ENCODE measurements at regions of chr9 and their contacts with region 1.

Region 1: DNA sequence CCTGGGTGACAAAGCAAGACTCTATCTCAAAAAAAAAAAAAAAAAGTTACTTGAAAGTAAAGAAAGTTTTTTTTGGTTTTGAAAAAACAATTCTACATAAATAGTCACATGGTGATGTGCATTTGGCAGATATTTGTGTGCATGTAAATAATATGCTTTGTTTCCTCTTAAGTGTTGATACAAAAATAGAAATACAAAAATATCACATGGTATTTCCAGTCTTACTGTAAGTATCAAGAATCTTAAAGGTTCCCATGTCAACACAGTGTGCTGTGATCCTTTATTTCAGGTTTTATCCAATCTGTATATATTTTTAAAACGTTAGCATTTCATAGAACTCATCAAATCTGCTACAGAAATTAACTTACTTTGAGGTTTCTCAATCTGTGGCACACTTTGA is 521.9 kb downstream of the TLE4 start:
- DNase-seq: no peak
- H3K4me3 ChIP-seq: no peak overlapping the region
- H3K4me3 Mint-ChIP-seq: no peak overlapping the region
- H3K27ac Mint-ChIP-seq: no peak overlapping the region
- H3K4me1 ChIP-seq: no peaks in the 10 kb centered on the region
- H3K4me1 Mint-ChIP-seq: no peaks in the 10 kb centered on the region
- H3K27me3 ChIP-seq: no peaks in the 10 kb centered on the region
- H3K27me3 Mint-ChIP-seq: no peaks in the 10 kb centered on the region
- CTCF ChIP-seq: no peak

Region 2: GRCh38 chr9:80004714-80005113 is 89.0 kb before region 1 on chr9:
- CTCF ChIA-PET with region 1: no interaction called
- POLR2A ChIA-PET with region 1: no interaction called
- intact Hi-C with region 1: no loop called
- DNase-seq: no peak
- H3K4me3 ChIP-seq: no peak overlapping the region
- H3K4me3 Mint-ChIP-seq: no peak overlapping the region
- H3K27ac Mint-ChIP-seq: no peak overlapping the region
- H3K4me1 ChIP-seq: no peaks in the 10 kb centered on the region
- H3K4me1 Mint-ChIP-seq: no peaks in the 10 kb centered on the region
- H3K27me3 ChIP-seq: no peaks in the 10 kb centered on the region
- H3K27me3 Mint-ChIP-seq: no peaks in the 10 kb centered on the region
- CTCF ChIP-seq: no peak

Region 3: GRCh38 chr9:80061940-80062339 is 31.8 kb before region 1 on chr9:
- CTCF ChIA-PET with region 1: no interaction called
- POLR2A ChIA-PET with region 1: no interaction called
- intact Hi-C with region 1: no loop called
- DNase-seq: no peak
- H3K4me3 ChIP-seq: no peak overlapping the region
- H3K4me3 Mint-ChIP-seq: no peak overlapping the region
- H3K27ac Mint-ChIP-seq: no peak overlapping the region
- H3K4me1 ChIP-seq: no peaks in the 10 kb centered on the region
- H3K4me1 Mint-ChIP-seq: no peaks in the 10 kb centered on the region
- H3K27me3 ChIP-seq: no peaks in the 10 kb centered on the region
- H3K27me3 Mint-ChIP-seq: no peaks in the 10 kb centered on the region
- CTCF ChIP-seq: no peak

Region 4: DNA sequence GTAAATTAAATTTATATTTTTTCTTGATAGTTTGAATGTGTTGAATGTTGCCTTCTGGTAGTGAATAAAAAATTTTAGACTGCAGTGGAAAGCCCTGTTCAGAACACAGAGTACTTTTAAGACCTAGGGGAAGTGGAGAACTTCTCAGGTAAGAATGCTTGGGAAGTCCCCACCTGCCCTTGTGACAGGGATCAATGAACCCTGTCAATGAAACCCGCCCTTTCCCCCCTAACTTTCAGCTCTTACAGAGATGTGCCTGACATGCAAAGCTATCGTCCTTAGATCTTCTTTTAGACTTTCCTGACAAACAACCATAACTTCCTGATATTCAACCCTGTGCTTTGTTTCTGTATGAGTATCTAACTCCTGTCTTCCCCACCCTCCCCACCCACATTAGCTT is 40.8 kb after region 1 on chr9:
- CTCF ChIA-PET with region 1: no interaction called
- POLR2A ChIA-PET with region 1: no interaction called
- intact Hi-C with region 1: loop called (anchors 2 kb)
- DNase-seq: no peak
- H3K4me3 ChIP-seq: no peak overlapping the region
- H3K4me3 Mint-ChIP-seq: no peak overlapping the region
- H3K27ac Mint-ChIP-seq: no peak overlapping the region
- H3K4me1 ChIP-seq: no peaks in the 10 kb centered on the region
- H3K4me1 Mint-ChIP-seq: no peaks in the 10 kb centered on the region
- H3K27me3 ChIP-seq: no peaks in the 10 kb centered on the region
- H3K27me3 Mint-ChIP-seq: no peaks in the 10 kb centered on the region
- CTCF ChIP-seq: no peak

Region 5: GRCh38 chr9:80836013-80836412 is 742.3 kb after region 1 on chr9:
- CTCF ChIA-PET with region 1: no interaction called
- POLR2A ChIA-PET with region 1: no interaction called
- intact Hi-C with region 1: no loop called
- DNase-seq: no peak
- H3K4me3 ChIP-seq: no peak overlapping the region
- H3K4me3 Mint-ChIP-seq: no peak overlapping the region
- H3K27ac Mint-ChIP-seq: no peak overlapping the region
- H3K4me1 ChIP-seq: no peaks in the 10 kb centered on the region
- H3K4me1 Mint-ChIP-seq: no peaks in the 10 kb centered on the region
- H3K27me3 ChIP-seq: no peaks in the 10 kb centered on the region
- H3K27me3 Mint-ChIP-seq: no peaks in the 10 kb centered on the region
- CTCF ChIP-seq: no peak